ENCODE measurements at regions of chr1 and their contacts with region 1.

Region 1: DNA sequence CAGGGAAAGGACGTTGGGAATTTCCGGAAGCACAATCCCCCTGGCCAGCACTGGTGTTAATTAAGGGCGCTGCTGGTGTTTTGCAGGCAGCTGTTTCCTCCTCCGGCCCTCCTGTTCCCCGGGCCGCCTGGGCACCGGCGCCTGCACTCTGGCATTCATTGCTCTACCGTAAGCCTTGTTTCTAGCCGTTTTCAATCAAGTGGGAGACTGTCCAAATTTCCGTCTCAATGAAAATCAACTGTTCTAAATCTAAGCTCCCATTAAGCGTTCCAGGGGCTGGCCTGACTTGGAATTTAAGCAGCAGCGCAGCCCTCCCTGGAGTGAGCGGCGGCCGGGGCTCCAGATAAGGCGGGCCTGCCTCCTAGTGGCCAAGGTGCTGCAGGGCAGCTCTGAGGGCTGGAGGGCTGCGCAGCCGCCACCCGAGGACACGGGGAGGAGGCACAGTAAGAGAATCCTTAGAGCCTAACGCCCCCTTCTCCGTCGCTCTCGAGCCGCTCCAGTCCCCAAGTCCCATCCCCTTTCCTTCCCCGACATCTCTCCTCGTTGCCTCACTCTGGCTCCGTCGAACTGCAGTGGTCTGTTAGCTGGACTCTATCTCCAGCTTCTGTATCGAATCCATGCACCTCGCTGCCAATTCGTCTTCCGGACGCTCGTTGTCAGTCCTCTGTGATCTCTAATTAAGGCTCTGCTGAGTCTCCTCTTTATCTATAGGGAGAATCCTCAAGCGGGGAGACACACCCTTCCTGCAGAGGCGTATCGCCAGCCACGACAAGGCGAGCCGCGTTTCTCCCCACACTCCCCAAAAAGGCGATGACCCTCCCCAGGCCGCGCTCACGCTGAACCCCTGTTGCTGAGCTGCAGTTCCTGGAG is 57.8 kb upstream of the LRRC8D start:
- DNase-seq: peak; percentile 69 to 91 (median 85)
- ATAC-seq: peak; percentile 99 to 100 (median 99)
- H3K4me3 ChIP-seq: peak overlapping the region; percentile 44 to 52
- H3K4me3 Mint-ChIP-seq: peak overlapping the region; percentile 83 to 84 (median 83)
- H3K27ac ChIP-seq: peak overlapping the region; percentile 59
- H3K27ac Mint-ChIP-seq: peak overlapping the region; percentile 82 to 95
- H3K4me1 ChIP-seq: peaks cover 19 to 37% of the 10 kb centered on the region in 2 experiments
- H3K4me1 Mint-ChIP-seq: peaks cover 48 to 59% (median 53%) of the 10 kb centered on the region in 3 donors
- H3K27me3 ChIP-seq: no peaks in the 10 kb centered on the region
- H3K27me3 Mint-ChIP-seq: no peaks in the 10 kb centered on the region

Region 2: DNA sequence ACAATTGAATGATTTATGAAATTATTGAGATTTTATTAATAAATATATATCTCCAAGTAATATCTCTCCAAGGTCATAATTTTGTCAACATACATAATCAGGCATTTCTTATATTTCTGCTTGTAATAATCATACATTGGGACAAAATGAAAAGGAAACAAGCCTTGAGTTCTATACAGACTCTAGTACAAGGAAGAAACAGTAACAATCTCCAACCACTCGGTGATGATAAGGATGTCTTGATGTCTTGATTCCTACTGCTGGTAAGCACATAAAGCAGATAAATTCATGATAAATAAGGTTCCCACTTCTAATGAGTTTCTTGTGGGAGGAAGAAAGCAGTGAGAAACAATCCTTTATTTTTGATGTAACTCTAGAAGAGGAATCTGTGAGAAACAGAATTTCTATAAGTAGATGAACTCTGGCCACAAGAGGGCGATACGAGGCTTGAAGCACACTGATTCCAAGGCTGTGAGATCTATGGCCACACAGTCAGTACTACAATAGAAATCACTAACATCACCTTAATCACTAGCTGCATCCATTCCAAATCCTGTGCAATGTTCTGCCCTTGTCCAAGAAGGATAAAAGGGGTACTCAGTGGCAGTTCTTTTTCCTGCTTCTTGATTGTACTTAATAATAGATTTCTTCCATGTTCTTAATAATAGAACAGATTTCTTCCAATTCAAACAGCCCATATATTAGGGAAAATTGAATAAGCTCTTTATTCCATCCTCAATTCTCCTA is 279.8 kb before region 1 on chr1:
- CTCF ChIA-PET with region 1: interaction called, 7 to 31 read pairs
- POLR2A ChIA-PET with region 1: interaction called in 1 of 2 experiments, 3 read pairs
- DNase-seq: peak; percentile 40 to 87 (median 70)
- ATAC-seq: peak; percentile 85 to 94 (median 88)
- H3K4me3 ChIP-seq: no peak overlapping the region
- H3K4me3 Mint-ChIP-seq: no peak overlapping the region
- H3K27ac ChIP-seq: no peak overlapping the region
- H3K27ac Mint-ChIP-seq: no peak overlapping the region
- H3K4me1 ChIP-seq: peaks cover 0 to 7% of the 10 kb centered on the region in 2 experiments
- H3K4me1 Mint-ChIP-seq: peaks cover 9 to 13% (median 11%) of the 10 kb centered on the region in 3 donors
- H3K27me3 ChIP-seq: peaks cover 0 to 3% of the 10 kb centered on the region in 2 experiments
- H3K27me3 Mint-ChIP-seq: peaks cover 0 to 3% of the 10 kb centered on the region in 2 donors

Region 3: DNA sequence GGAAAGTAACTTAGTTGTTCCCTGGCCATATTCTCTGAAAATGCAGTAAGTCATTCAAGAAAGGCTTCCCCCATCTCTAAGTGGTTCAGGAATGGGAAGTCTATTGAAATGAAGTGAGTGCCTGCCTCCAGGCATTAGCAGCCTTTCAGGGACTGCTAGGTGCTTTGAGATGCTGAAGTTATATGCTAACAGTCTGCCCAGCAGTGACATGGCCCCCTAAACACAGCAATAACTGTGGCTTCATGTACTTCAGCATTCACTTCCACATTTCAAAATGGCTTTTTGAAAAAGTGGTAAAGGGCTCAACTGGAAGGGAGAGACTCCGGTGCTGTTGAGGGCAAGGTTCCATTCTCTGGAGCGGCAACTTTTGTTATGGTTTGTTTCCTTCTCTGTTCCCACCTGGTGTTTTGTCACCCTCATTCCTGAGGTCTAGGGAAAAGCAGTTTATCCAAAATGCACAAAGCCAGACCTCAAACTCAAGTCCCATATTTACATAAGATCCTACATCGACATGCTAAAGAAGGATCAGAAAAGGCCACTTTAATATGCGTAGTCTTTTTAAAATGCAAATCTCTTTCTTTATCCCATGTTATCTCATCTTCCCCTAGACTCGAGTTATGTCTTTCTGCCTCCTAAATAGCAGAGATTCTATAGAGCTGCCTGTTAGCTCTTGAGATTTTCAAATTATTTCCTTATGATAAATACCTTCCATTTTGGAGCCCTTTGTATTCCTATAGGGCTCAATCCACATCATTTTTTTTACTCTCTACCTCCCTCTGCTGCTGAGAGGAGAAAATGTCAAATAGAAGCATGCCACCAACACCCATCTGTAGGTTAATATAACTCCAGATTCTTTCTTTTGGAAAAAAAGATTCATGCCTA is 164.3 kb before region 1 on chr1:
- CTCF ChIA-PET with region 1: interaction called, 10 to 14 read pairs
- POLR2A ChIA-PET with region 1: interaction called in 1 of 2 experiments, 7 read pairs
- DNase-seq: peak in 2 of 35 experiments; percentile 35 to 68
- ATAC-seq: peak in 3 of 4 experiments; percentile 50 to 64 (median 57)
- H3K4me3 ChIP-seq: no peak overlapping the region
- H3K4me3 Mint-ChIP-seq: peak overlapping the region in 1 of 3 donors; percentile 4
- H3K27ac ChIP-seq: no peak overlapping the region
- H3K27ac Mint-ChIP-seq: peak overlapping the region; percentile 85 to 87
- H3K4me1 ChIP-seq: peaks cover 18 to 23% of the 10 kb centered on the region in 2 experiments
- H3K4me1 Mint-ChIP-seq: peaks cover 85 to 88% (median 87%) of the 10 kb centered on the region in 3 donors
- H3K27me3 ChIP-seq: no peaks in the 10 kb centered on the region
- H3K27me3 Mint-ChIP-seq: no peaks in the 10 kb centered on the region

Region 4: DNA sequence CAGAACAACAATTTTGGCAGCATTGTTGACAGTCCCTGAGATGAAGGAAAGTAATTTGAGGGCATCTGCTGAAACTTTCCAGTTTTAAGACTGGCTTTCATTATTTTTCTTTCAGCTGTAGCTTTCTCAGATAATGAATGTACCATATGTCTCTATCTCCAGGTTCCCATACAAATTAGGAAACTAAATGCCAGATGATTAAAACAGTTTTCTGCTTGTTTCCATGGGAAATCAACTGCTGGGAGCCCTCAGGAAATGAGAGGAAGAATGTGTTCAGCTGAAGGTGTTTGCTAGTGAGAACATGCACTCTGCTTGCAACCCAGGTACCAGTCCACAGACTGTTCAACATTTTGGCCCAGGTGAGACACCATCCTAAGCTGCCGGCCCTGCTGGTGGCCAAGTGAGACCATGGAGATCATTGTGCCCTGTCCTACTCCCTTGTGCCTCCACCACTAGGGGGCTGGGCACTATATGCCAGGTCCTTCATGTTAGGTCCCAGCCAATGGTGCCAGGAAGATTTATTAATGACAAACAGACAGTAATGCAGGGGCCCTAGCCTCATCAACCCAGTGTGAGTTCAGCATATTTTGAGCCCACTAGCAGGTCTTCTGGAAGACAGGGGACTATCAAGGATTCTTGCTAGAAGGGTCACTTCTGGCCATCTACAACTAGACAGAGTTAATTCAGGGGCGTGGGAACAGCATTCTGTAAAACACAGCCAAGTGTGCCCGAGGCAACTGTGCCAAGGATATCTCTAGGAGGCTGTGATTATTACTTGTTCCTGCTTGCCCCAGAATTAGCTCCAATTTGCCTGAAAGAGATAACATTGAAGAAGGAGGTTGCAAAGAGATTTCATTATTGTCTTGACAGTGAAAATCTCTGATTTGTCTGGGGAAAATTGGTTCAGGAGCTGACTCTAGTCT is 147.1 kb before region 1 on chr1:
- CTCF ChIA-PET with region 1: interaction called, 6 to 25 read pairs
- POLR2A ChIA-PET with region 1: no interaction called
- DNase-seq: peak in 3 of 35 experiments; percentile 7 to 49 (median 21)
- ATAC-seq: no peak
- H3K4me3 ChIP-seq: no peak overlapping the region
- H3K4me3 Mint-ChIP-seq: no peak overlapping the region
- H3K27ac ChIP-seq: no peak overlapping the region
- H3K27ac Mint-ChIP-seq: peak overlapping the region; percentile 67 to 72
- H3K4me1 ChIP-seq: peaks cover 26 to 29% of the 10 kb centered on the region in 2 experiments
- H3K4me1 Mint-ChIP-seq: peaks cover 80 to 88% (median 82%) of the 10 kb centered on the region in 3 donors
- H3K27me3 ChIP-seq: no peaks in the 10 kb centered on the region
- H3K27me3 Mint-ChIP-seq: no peaks in the 10 kb centered on the region

Region 5: GRCh38 chr1:89632657-89633247 is 130.3 kb before region 1 on chr1 and contains the start of gene LRRC8C:
- CTCF ChIA-PET with region 1: interaction called, 7 to 41 read pairs
- POLR2A ChIA-PET with region 1: interaction called, 11 to 12 read pairs
- DNase-seq: peak; percentile 72 to 94 (median 86)
- ATAC-seq: peak; percentile 85 to 90 (median 86)
- H3K4me3 ChIP-seq: peak within 1 kb of the TSS; percentile 86 to 99
- H3K4me3 Mint-ChIP-seq: peak within 1 kb of the TSS; percentile 95 to 96 (median 96)
- H3K27ac ChIP-seq: peak within 1 kb of the TSS; percentile 92
- H3K27ac Mint-ChIP-seq: peak within 1 kb of the TSS; percentile 97 to 98
- H3K4me1 ChIP-seq: peaks cover 28 to 60% of the 10 kb centered on the region in 2 experiments
- H3K4me1 Mint-ChIP-seq: peaks cover 76 to 87% (median 79%) of the 10 kb centered on the region in 3 donors
- H3K27me3 ChIP-seq: no peaks in the 10 kb centered on the region
- H3K27me3 Mint-ChIP-seq: no peaks in the 10 kb centered on the region
- total RNA-seq, gene LRRC8C: 33.4 to 48.4 (median 41.9) TPM

Region 6: GRCh38 chr1:89815040-89815439 is 52.0 kb after region 1 on chr1:
- CTCF ChIA-PET with region 1: interaction called, 3 to 10 read pairs
- POLR2A ChIA-PET with region 1: no interaction called
- DNase-seq: no peak
- ATAC-seq: no peak
- H3K4me3 ChIP-seq: no peak overlapping the region
- H3K4me3 Mint-ChIP-seq: no peak overlapping the region
- H3K27ac ChIP-seq: no peak overlapping the region
- H3K27ac Mint-ChIP-seq: no peak overlapping the region
- H3K4me1 ChIP-seq: peaks cover 5 to 6% of the 10 kb centered on the region in 2 experiments
- H3K4me1 Mint-ChIP-seq: peaks cover 14 to 24% (median 16%) of the 10 kb centered on the region in 3 donors
- H3K27me3 ChIP-seq: peaks cover 0 to 4% of the 10 kb centered on the region in 2 experiments
- H3K27me3 Mint-ChIP-seq: peaks cover 4 to 11% of the 10 kb centered on the region in 2 donors